ENCODE measurements at regions of chr17 and their contacts with region 1.

Region 1: DNA sequence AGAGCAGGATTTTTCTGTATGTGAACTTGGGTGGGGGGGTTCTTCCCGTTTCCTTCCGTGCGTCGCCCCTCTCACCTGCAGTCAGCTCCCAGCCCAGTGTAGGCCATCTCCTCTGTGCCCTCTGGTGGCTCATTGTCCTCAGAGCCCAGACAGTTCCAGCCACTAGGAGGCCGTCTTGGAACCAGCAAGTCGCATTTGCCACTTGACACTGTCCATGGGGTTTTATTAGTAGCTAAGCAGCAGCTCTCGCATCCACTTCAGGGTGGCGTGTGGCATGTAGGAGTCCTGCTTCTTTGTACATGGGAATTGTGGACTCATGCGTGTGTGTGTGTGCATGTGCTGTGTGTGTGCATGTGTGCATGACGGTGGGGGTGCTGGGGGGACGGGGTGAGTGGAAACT is 74.0 kb downstream of the SEC14L1 start:
- DNase-seq: peak in 7 of 10 donors; percentile 58 to 77 (median 68)
- H3K4me3 ChIP-seq: no peak overlapping the region
- H3K27ac ChIP-seq: peak overlapping the region in 56 of 59 donors; percentile 8 to 98 (median 93)
- H3K27me3 ChIP-seq: no peaks in the 10 kb centered on the region
- CTCF ChIP-seq: peak; percentile 15 to 80 (median 64)

Region 2: DNA sequence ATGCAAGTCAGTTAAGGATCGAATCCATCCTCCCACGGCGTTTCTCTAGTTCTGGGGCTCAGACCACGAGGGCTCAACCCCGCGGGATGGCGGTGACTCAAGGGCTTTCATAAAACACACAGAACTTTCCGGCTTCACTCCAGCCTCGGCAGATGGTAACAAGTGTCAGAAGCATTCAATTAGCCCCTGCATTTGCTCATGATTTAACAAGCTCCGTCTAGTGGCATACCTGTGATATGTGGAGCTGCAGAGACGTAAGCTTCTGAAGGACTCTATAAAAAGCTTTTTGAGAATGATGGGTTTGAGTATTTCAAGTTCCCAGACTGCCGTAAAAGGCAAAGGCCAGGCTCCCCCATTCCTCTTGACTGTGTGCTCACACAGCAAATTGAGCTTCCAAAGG is 165.3 kb before region 1 on chr17:
- intact Hi-C with region 1: no loop called
- DNase-seq: no peak
- H3K4me3 ChIP-seq: no peak overlapping the region
- H3K27ac ChIP-seq: no peak overlapping the region
- H3K27me3 ChIP-seq: peaks cover 0 to 10% (median 0%) of the 10 kb centered on the region in 45 donors
- CTCF ChIP-seq: peak in 2 of 56 donors; percentile 8 to 10

Region 3: GRCh38 chr17:77096570-77097214 is 118.1 kb before region 1 on chr17:
- intact Hi-C with region 1: loop called (anchors 2 to 5 kb)
- DNase-seq: no peak
- H3K4me3 ChIP-seq: peak overlapping the region in 6 of 59 donors; percentile 0 to 20 (median 6)
- H3K27ac ChIP-seq: peak overlapping the region; percentile 52 to 100 (median 97)
- H3K27me3 ChIP-seq: no peaks in the 10 kb centered on the region
- CTCF ChIP-seq: peak; percentile 68 to 95 (median 85)

Region 4: GRCh38 chr17:77140166-77140878 is 74.4 kb before region 1 on chr17:
- intact Hi-C with region 1: loop called (anchors 5 kb)
- DNase-seq: peak; percentile 96 to 100 (median 99)
- H3K4me3 ChIP-seq: peak overlapping the region; percentile 53 to 96 (median 83)
- H3K27ac ChIP-seq: peak overlapping the region; percentile 66 to 99 (median 97)
- H3K27me3 ChIP-seq: no peaks in the 10 kb centered on the region
- CTCF ChIP-seq: peak in 29 of 56 donors; percentile 3 to 50 (median 25)

Region 5: GRCh38 chr17:77247048-77247541 is 32.4 kb after region 1 on chr17:
- intact Hi-C with region 1: loop called in 1 of 2 experiments (anchors 2 kb)
- DNase-seq: peak; percentile 68 to 91 (median 78)
- H3K4me3 ChIP-seq: peak overlapping the region; percentile 50 to 93 (median 76)
- H3K27ac ChIP-seq: peak overlapping the region in 52 of 59 donors; percentile 7 to 92 (median 68)
- H3K27me3 ChIP-seq: no peaks in the 10 kb centered on the region
- CTCF ChIP-seq: peak; percentile 87 to 100 (median 99)

Measured in dorsolateral prefrontal cortex (tissue), 120 donors.